ENCODE measurements at regions of chr9 and their contacts with region 1.

Region 1: DNA sequence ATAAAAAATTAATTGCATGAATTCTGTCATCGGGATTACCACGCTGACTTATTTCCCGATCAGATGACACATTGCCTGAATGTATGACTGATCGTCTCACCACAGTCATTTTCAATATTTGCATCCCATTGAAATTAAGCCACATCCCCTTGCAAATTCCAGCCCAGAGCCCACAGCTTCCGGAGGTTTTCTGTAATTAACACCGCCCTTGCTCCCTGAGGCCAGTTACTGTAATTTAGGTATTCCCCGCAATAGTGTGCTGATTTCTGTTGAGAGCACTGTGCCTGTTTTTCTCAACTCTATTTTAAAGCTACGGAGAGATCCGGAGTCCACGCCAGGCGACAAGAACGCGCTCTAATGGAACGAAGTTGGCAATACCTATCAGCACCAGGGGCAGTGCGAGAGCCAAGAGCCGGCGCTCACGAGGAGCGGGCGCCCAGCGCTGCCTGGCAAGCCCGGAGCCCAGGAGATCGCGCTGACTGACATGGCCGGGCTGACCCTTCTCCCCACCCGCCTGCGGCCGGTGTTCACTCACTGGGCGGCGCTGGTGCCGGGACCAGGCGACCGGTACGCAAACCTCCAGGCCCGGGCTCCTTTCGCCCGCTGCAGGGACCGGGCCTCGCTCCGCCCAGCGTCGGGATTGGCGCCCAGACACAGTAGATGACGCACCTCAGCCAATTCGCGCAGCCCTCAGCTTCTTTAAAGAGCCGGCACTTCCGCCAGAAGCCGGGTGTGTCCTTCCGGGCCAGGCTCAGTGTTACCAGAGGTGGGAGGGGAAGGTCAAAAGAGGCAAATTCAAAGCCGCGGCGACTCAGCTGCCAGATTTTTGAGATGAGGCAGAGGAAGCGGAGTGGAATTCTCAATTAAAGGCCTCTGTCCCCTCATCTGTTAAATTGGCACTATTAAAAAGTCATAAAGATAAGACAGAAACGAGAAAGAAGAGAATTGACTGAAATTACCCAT is at the start of gene PLGRKT:
- DNase-seq: peak; percentile 82
- ATAC-seq: peak; percentile 78
- H3K4me3 Mint-ChIP-seq: peak within 1 kb of the TSS; percentile 96
- H3K27ac Mint-ChIP-seq: peak within 1 kb of the TSS; percentile 100
- H3K4me1 Mint-ChIP-seq: peaks cover 59% of the 10 kb centered on the region
- H3K27me3 Mint-ChIP-seq: no peaks in the 10 kb centered on the region
- CTCF ChIP-seq: no peak
- total RNA-seq, gene PLGRKT: 57.1 and 59.7 TPM in 2 replicates

Region 2: DNA sequence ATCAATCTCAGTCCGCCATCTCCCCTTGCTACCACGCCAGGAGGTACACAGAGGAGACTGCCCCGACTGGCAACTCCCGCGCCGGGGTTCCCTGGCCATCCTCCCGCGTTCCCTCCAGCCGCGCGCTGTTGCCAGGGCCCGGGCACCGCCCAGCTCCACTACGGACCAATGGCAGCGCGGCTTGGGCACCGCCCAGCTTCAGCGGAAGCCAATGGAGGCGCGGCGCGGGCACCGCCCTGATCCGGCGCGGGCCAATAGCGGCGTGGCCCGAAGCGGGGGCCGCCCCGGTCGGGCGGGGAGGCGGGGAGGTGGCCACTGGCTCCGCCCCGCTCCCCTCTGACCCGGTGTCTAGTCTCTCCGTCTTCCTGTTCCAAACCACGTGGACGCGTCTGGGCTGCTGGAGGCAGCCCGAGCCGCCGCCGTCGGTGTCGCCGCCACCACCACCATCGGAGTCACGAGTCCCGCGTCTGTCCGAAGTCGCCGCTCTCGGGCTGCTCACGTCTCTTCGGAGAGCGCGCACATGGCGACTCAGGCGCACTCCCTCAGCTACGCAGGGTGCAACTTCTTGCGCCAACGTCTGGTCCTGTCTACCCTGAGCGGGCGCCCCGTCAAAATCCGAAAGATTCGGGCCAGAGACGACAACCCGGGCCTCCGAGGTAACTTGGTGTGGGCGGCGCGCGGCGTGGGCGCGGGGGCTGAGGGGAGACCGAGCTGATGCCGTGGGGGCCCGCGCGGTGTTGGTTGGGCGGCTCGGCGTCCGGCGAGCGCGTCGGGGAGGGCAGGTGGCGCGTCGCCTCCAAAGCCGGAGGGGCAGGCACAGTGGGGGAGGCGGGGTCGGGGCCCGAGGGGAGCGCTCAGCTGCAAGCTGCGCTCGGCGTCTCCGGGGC is 644.7 kb before region 1 on chr9 and contains the start of gene RCL1:
- CTCF ChIA-PET with region 1: interaction called, 3 read pairs
- POLR2A ChIA-PET with region 1: interaction called, 10 read pairs
- intact Hi-C with region 1: loop called (anchors 1 kb)
- DNase-seq: peak; percentile 97
- ATAC-seq: peak; percentile 93
- H3K4me3 Mint-ChIP-seq: peak within 1 kb of the TSS; percentile 97
- H3K27ac Mint-ChIP-seq: peak within 1 kb of the TSS; percentile 96
- H3K4me1 Mint-ChIP-seq: peaks cover 40% of the 10 kb centered on the region
- H3K27me3 Mint-ChIP-seq: peaks cover 2% of the 10 kb centered on the region
- CTCF ChIP-seq: no peak
- total RNA-seq, gene RCL1: 23.9 and 26.0 TPM in 2 replicates

Region 3: DNA sequence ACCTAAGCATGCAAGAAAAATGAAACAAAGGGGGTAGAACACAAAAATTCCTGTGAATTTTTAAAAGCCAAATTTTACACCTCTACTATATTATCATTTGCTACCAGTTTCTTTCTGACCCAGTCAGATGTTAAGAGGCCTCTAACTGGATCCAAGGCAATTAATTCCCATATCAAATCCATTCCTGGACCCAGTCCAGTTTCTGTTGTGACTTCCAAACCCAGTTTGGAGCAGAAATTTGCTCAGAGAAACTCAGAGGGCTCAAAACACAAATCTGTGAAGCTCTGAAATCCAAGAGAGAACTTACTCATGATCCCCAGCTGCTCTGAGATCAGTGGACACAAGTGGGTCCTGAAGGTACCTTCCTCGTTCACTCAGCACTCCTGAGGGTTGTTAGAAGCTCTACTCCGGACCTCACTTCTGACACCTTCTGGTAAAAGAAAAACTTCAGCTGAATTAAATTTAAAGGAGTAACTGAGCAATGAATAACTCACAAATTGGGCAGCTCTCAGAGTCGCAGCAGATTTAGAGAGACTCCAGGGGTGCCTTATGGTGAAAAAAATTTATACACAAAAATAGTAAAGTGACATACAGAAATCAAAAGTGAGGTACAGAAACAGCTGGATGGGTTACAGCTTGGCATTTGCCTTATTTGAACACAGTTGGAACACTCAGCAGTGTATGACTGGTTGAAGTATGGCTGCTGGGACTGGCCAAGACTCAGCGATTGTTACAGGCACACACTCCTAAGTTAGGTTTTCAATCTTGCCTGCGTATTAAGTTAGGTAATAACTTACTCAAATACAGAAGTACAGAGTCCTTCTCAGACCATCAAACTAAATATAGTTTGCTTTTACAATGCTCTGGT is 173.9 kb before region 1 on chr9:
- CTCF ChIA-PET with region 1: no interaction called
- POLR2A ChIA-PET with region 1: no interaction called
- intact Hi-C with region 1: no loop called
- DNase-seq: no peak
- ATAC-seq: no peak
- H3K4me3 Mint-ChIP-seq: no peak overlapping the region
- H3K27ac Mint-ChIP-seq: no peak overlapping the region
- H3K4me1 Mint-ChIP-seq: no peaks in the 10 kb centered on the region
- H3K27me3 Mint-ChIP-seq: no peaks in the 10 kb centered on the region
- CTCF ChIP-seq: no peak

Region 4: GRCh38 chr9:5425006-5425628 is 12.4 kb before region 1 on chr9:
- CTCF ChIA-PET with region 1: interaction called, 6 read pairs
- POLR2A ChIA-PET with region 1: interaction called, 17 read pairs
- intact Hi-C with region 1: loop called (anchors 2 kb)
- DNase-seq: no peak
- ATAC-seq: no peak
- H3K4me3 Mint-ChIP-seq: no peak overlapping the region
- H3K27ac Mint-ChIP-seq: no peak overlapping the region
- H3K4me1 Mint-ChIP-seq: peaks cover 14% of the 10 kb centered on the region
- H3K27me3 Mint-ChIP-seq: no peaks in the 10 kb centered on the region
- CTCF ChIP-seq: no peak

Region 5: GRCh38 chr9:5529683-5530221 is 92.2 kb after region 1 on chr9:
- CTCF ChIA-PET with region 1: interaction called, 5 read pairs
- POLR2A ChIA-PET with region 1: interaction called, 32 read pairs
- intact Hi-C with region 1: no loop called
- DNase-seq: no peak
- ATAC-seq: peak; percentile 57
- H3K4me3 Mint-ChIP-seq: peak overlapping the region; percentile 60
- H3K27ac Mint-ChIP-seq: peak overlapping the region; percentile 51
- H3K4me1 Mint-ChIP-seq: peaks cover 57% of the 10 kb centered on the region
- H3K27me3 Mint-ChIP-seq: no peaks in the 10 kb centered on the region
- CTCF ChIP-seq: no peak

Region 6: GRCh38 chr9:5593904-5594303 is 156.4 kb after region 1 on chr9:
- CTCF ChIA-PET with region 1: interaction called, 56 read pairs
- POLR2A ChIA-PET with region 1: interaction called, 238 read pairs
- intact Hi-C with region 1: loop called (anchors 1 kb)
- DNase-seq: no peak
- ATAC-seq: peak; percentile 32
- H3K4me3 Mint-ChIP-seq: peak overlapping the region; percentile 70
- H3K27ac Mint-ChIP-seq: peak overlapping the region; percentile 98
- H3K4me1 Mint-ChIP-seq: peaks cover 94% of the 10 kb centered on the region
- H3K27me3 Mint-ChIP-seq: no peaks in the 10 kb centered on the region
- CTCF ChIP-seq: no peak

Region 7: DNA sequence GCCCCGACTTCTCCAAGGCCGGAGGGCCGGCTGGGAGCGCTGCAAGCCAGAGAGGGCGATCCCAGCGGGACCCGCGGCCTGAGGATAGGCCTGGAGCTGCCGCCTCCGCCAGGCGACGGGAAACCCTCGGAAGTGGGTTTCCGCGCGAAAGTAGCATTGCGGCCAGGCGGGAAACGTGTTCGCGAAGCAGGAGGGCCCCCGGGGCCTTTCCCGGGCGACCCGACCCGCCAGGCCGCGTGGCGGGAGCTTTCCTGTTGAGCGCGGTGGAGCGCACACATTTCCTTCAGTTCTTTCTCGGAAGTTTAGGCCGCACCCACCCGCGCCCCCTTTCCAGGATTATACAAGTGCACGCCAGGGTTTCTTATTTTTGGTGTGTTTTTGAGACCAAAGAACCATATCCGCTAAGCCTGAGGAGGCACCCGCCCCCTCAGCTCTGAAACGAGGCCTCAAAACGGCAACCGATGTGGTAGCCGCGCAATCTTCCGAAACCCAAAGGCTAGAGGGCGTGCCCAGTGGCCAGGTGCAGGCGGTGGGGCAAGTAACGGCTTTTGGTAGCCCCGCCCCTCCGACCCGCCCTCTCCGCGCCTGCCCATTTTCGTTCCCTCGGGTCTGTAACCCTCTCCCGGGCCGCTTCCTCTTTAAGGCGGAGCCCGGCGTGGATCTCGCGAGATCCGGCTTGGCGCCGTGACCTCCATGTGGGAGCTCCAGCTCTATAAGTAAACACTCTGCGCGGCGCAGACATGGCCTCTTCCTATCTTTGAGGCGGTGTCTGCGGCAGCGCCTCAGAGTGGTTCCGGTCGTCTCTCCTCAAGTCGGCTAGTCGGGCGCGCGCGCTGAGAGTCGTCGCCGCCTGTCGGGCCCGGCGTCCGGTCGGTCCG is 975.2 kb after region 1 on chr9 and contains the start of gene UHRF2:
- CTCF ChIA-PET with region 1: no interaction called
- POLR2A ChIA-PET with region 1: interaction called, 3 read pairs
- intact Hi-C with region 1: loop called (anchors 2 kb)
- DNase-seq: peak; percentile 95
- ATAC-seq: peak; percentile 87
- H3K4me3 Mint-ChIP-seq: peak within 1 kb of the TSS; percentile 82
- H3K27ac Mint-ChIP-seq: peak within 1 kb of the TSS; percentile 96
- H3K4me1 Mint-ChIP-seq: peaks cover 61% of the 10 kb centered on the region
- H3K27me3 Mint-ChIP-seq: no peaks in the 10 kb centered on the region
- CTCF ChIP-seq: no peak
- total RNA-seq, gene UHRF2: 81.1 and 114 TPM in 2 replicates